ENCODE measurements at regions of chr13 and their contacts with region 1.

Region 1: GRCh38 chr13:62119739-62120700 is 704.4 kb upstream of the PCDH20 start:
- DNase-seq: no peak
- ATAC-seq: peak; percentile 54
- H3K4me3 ChIP-seq: no peak overlapping the region
- H3K27ac ChIP-seq: no peak overlapping the region
- H3K4me1 ChIP-seq: no peaks in the 10 kb centered on the region
- H3K27me3 ChIP-seq: no peaks in the 10 kb centered on the region
- CTCF ChIP-seq: peak in 2 of 3 experiments; percentile 36 to 45; a peak in 3 of 6 replicates
- EP300 ChIP-seq: no peak
- POLR2A ChIP-seq: no peak
- RAD21 ChIP-seq: peak; percentile 63

Region 2: DNA sequence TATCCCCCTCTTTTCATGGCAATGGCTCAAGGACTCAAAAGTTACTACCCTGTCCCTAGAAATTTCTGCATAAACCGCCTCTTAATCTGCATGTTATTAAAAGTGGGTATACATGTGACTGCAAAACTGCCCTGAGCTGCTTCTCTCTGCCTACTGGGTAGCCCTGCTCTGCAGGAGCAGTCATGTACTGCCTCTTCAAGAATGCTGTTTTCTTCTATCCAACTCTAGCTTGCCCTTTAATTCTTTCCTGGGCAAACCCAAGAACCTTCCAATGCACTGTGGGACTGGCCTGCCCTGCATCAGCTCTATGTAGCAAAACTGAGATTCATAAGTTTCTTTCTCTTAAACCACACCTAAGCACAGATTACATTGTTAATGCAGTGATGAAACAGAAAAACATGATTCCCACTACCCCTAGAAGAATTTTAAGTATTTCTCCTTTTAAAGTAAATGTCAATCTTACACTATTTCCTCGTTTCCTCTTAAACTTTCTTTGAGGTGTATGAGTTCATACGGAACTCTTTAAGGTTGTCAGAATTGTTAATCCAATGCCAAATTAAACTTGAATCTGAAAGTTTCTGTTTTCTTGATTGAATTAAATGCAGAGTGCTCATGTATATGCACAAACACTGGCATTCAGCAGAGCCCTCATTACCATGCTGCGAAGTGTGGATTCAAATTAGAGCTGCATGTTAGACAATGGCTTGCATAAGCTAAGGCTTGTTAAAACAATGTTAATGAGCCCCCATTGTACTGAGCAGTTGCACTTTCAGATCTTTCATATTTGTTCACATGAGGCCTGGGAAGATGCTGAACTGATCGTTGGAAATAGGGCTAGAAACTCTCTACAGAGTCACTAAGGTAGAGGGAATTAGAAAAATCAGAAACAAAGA is 34.4 kb before region 1 on chr13:
- CTCF ChIA-PET with region 1: no interaction called
- POLR2A ChIA-PET with region 1: no interaction called
- RAD21 ChIA-PET with region 1: no interaction called
- SMC1A ChIA-PET with region 1: no interaction called
- in situ Hi-C with region 1: no loop called
- intact Hi-C with region 1: no loop called
- DNase-seq: no peak
- ATAC-seq: 0 out of 3 replicates have a peak, but pooled peaks have one; percentile 22
- H3K4me3 ChIP-seq: no peak overlapping the region
- H3K27ac ChIP-seq: no peak overlapping the region
- H3K4me1 ChIP-seq: no peaks in the 10 kb centered on the region
- H3K27me3 ChIP-seq: no peaks in the 10 kb centered on the region
- CTCF ChIP-seq: no peak
- EP300 ChIP-seq: no peak
- POLR2A ChIP-seq: no peak
- RAD21 ChIP-seq: no peak

Region 3: GRCh38 chr13:62130062-62130970 is 10.3 kb after region 1 on chr13:
- CTCF ChIA-PET with region 1: interaction called, 12 read pairs
- POLR2A ChIA-PET with region 1: no interaction called
- RAD21 ChIA-PET with region 1: interaction called, 6 read pairs
- SMC1A ChIA-PET with region 1: interaction called, 7 read pairs
- in situ Hi-C with region 1: no loop called
- intact Hi-C with region 1: no loop called
- DNase-seq: no peak
- ATAC-seq: no peak
- H3K4me3 ChIP-seq: no peak overlapping the region
- H3K27ac ChIP-seq: no peak overlapping the region
- H3K4me1 ChIP-seq: no peaks in the 10 kb centered on the region
- H3K27me3 ChIP-seq: no peaks in the 10 kb centered on the region
- CTCF ChIP-seq: no peak
- EP300 ChIP-seq: no peak
- POLR2A ChIP-seq: no peak
- RAD21 ChIP-seq: no peak

Region 4: DNA sequence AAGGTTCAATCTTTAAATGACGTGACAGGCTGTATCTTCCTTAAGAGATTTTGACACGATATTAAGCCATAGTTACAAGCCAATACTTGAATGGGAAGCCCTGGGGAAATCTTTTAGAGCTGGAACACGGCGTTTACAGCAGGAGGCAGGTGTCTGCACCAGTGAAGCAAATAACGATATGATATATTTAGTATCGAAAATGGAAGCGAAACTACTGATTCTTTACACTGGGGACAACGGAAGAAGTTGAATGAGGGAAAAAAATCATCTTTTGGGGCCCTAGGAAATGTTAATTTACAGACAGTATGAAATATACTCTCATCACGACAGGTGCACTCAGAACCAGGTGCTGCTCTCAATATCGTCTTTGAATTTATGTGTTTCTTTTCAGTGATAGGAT is 89.5 kb after region 1 on chr13:
- CTCF ChIA-PET with region 1: interaction called, 12 read pairs
- POLR2A ChIA-PET with region 1: no interaction called
- RAD21 ChIA-PET with region 1: interaction called, 11 read pairs
- SMC1A ChIA-PET with region 1: interaction called, 8 read pairs
- in situ Hi-C with region 1: no loop called
- intact Hi-C with region 1: loop called (anchors 2 kb)
- DNase-seq: peak; percentile 65
- ATAC-seq: peak; percentile 92
- H3K4me3 ChIP-seq: peak overlapping the region; percentile 43
- H3K27ac ChIP-seq: peak overlapping the region; percentile 84
- H3K4me1 ChIP-seq: peaks cover 10% of the 10 kb centered on the region
- H3K27me3 ChIP-seq: no peaks in the 10 kb centered on the region
- CTCF ChIP-seq: no peak
- EP300 ChIP-seq: peak; percentile 62 to 68; a peak in 2 of 4 replicates
- POLR2A ChIP-seq: no peak
- RAD21 ChIP-seq: peak; percentile 36; the same call in 1 of the 2 replicates

Region 5: GRCh38 chr13:62320129-62321108 is 200.4 kb after region 1 on chr13:
- CTCF ChIA-PET with region 1: interaction called, 22 read pairs
- POLR2A ChIA-PET with region 1: no interaction called
- RAD21 ChIA-PET with region 1: interaction called, 36 read pairs
- SMC1A ChIA-PET with region 1: interaction called, 19 read pairs
- in situ Hi-C with region 1: no loop called
- intact Hi-C with region 1: loop called (anchors 10 kb)
- DNase-seq: peak; percentile 36
- ATAC-seq: peak; percentile 85
- H3K4me3 ChIP-seq: no peak overlapping the region
- H3K27ac ChIP-seq: no peak overlapping the region
- H3K4me1 ChIP-seq: no peaks in the 10 kb centered on the region
- H3K27me3 ChIP-seq: no peaks in the 10 kb centered on the region
- CTCF ChIP-seq: peak; percentile 50 to 66 (median 55); a peak in 5 of 6 replicates
- EP300 ChIP-seq: no peak
- POLR2A ChIP-seq: no peak
- RAD21 ChIP-seq: peak; percentile 92

Region 6: DNA sequence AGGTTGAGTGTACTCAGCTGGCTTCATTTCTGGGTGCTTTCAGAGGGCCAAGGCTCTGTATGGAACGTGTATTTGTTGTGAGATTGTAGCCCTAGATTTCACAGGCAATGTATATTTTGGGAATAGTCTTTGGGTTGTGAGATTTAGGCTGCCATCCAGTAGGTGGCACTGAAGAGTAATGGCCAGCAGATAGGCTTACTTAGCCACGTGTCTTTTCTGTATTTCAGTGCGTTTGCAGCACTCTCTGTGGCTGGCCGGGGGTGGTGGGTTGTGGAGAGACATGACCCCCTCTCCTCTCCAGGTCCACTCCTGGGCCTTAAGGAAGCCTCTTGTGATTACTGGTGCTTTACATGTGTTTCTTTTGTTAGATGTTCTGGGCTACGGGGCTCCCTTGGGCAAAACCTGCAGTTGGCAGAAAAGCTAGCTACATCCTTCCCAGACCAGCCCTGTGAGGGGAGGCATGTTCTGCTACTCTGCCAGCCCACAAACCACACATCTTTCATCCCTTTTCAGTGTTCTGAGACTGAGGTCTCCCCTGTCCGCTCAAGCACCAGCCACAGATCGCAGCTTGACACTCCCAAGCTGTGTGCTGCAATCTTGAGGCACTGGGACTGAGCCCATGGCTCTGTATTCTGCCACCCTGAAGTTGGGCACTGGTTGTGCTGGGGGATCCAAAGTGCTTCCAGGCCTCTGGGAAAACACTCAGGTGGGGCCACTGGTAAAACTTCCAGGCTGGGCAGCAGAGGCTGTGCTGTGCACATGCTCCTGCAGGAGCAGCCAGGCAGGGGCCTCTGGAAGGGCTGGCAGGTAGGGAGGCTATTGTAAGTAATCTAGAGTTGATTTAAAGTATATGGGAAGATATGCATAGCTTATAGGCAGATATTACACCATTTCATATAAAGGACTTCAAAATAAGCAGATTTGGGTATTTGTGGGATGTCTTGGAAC is 392.4 kb after region 1 on chr13:
- CTCF ChIA-PET with region 1: interaction called, 9 read pairs
- POLR2A ChIA-PET with region 1: no interaction called
- RAD21 ChIA-PET with region 1: interaction called, 7 read pairs
- SMC1A ChIA-PET with region 1: interaction called, 8 read pairs
- in situ Hi-C with region 1: no loop called
- intact Hi-C with region 1: loop called (anchors 10 kb)
- DNase-seq: peak; percentile 24
- ATAC-seq: peak; percentile 98
- H3K4me3 ChIP-seq: peak overlapping the region; percentile 55; the same call in 1 of the 2 replicates
- H3K27ac ChIP-seq: no peak overlapping the region
- H3K4me1 ChIP-seq: peaks cover 11% of the 10 kb centered on the region; the same call in 1 of the 2 replicates
- H3K27me3 ChIP-seq: no peaks in the 10 kb centered on the region
- CTCF ChIP-seq: peak; percentile 84 to 89 (median 88)
- EP300 ChIP-seq: no peak
- POLR2A ChIP-seq: no peak
- RAD21 ChIP-seq: peak; percentile 91

Measured in GM12878 (cell line).